ENCODE measurements at regions of chr1 and their contacts with region 1.

Region 1: GRCh38 chr1:205255941-205256780 is 28.4 kb downstream of the TMCC2 start:
- DNase-seq: peak; percentile 83
- CTCF ChIP-seq: peak; percentile 93

Region 2: GRCh38 chr1:204975570-204976235 is 280.5 kb before region 1 on chr1:
- CTCF ChIA-PET with region 1: interaction called, 71 read pairs
- POLR2A ChIA-PET with region 1: no interaction called
- DNase-seq: peak; percentile 83
- CTCF ChIP-seq: peak; percentile 92

Region 3: DNA sequence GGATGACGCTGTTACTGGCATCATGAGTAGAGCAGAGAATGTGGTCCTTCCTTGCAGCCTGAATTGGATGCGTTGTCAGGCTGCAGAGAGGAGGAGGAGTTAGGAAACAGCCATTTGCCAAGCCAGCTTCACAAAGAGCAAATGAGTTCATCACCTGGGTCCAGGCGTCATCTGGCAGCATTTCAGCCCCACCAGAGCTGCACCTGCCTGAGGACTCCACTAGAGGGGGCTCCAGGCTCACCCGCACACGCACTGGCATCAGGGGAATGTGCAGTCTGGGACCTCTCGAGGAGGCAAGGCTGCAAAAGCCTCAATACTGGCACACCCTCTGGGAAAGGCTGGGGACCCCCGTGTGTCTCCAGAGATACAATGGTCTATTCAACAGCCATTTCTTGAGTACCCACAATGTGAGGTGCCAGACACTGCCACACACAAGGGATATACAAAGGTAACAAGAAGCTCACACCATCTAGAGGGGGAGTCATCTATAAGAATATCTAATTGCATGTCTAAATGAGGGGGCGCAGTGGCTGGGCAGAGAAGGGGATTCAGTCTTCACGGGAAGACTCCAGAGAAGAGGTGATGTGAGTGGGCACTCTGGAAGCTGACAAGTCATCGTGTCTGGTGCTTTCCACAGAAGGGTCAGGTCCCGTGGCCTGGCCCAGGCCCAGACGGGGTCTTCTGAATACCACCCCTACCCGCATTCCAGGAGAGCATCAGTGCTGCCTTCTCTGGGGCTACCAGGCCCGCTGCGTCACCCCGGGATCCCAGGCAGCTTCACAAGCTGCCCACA is 266.7 kb before region 1 on chr1:
- CTCF ChIA-PET with region 1: interaction called, 59 read pairs
- POLR2A ChIA-PET with region 1: no interaction called
- DNase-seq: peak; percentile 87
- CTCF ChIP-seq: peak; percentile 92

Region 4: GRCh38 chr1:205217418-205217817 is 38.7 kb before region 1 on chr1:
- CTCF ChIA-PET with region 1: interaction called, 10 read pairs
- POLR2A ChIA-PET with region 1: no interaction called
- DNase-seq: no peak
- CTCF ChIP-seq: no peak

Region 5: DNA sequence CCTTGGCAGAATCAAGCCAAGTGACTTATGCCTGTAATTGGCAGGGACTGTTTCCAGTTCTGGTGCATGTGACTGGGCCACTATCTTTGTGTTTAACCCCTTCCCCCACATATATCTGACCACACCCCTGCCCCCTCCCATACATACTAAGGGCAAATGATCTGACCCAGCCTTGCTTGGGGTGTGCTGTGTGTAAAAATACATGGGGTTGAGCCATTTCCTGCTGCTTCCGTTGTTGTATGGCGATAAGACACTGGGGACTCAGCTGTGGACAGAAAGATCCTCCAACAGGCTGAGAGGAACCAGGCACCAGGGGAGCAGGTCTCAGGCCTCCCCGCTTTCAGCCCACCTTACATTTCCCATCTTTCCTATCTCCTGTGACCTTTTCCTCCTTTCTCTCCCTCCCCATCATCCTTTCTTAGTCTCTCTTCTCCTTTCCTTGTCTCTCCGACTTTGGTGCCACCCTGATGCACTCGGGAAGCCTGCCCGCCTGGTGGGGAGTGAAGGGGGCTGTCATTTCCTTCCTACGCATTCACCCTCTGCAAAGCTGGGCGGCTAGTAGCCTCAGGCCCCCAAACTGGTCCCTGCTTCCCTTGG is 11.2 kb after region 1 on chr1:
- CTCF ChIA-PET with region 1: interaction called, 246 read pairs
- POLR2A ChIA-PET with region 1: no interaction called
- DNase-seq: no peak
- CTCF ChIP-seq: no peak

Region 6: DNA sequence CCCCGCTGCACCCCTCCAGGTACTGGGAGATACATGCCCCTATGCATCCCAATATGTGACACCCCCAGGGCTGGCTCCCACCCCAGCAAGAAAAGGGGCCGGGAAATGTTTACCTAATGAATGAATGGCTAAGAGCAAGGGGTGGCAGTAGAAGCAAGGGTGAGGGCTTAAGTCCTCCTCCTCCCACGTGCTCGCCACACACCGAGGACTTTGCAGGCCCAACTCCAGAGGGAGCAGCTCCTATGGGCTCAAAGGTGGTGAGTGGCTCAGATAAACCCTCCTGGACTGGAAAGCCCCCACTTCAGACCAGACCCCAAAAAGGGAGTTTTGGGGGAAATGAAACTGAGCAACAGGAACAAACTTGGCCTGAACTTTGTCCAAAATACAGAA is 412.8 kb after region 1 on chr1:
- CTCF ChIA-PET with region 1: no interaction called
- POLR2A ChIA-PET with region 1: no interaction called
- DNase-seq: peak; percentile 76
- CTCF ChIP-seq: peak; percentile 24

Measured in GM10248 (cell line).